Cardiac septum (tissue), 1 donor: ENCODE measurements at regions of chr6 and their contacts with region 1.

Region 1: DNA sequence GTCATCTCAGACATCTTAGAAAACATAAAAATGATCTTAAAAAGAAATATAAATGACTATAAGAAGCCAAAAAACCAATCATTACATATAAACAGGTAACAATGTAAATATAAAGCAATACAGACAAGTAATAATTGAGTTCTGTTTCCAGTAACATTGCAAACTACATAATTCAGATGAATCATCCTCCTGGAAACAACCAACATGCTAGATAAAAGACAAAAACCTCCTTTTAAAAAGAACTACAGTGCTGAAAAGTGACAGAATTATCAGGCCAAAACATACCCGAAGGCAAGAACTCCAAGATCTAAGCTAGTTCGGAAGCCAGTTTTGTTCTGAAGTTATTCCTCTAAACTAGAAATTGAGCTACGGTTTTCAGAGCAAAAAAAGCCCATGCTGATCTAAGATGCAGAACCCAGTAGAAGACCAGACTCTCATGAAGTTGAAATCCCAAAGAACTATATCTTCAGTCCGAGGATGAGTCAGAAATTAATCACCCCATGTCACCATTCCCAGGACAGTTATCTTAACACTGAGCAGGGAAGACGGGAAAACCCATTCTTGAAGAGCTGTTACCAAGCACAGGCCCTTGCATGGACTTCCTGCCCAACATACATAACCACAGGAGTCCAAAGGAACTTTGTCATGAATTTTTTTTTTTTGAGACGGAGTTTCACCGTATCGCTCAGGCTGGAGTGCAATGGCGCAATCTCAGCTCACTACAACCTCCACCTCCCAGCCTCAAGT is 9.8 kb downstream of the PGM3 start:
- DNase-seq: no peak

Region 2: DNA sequence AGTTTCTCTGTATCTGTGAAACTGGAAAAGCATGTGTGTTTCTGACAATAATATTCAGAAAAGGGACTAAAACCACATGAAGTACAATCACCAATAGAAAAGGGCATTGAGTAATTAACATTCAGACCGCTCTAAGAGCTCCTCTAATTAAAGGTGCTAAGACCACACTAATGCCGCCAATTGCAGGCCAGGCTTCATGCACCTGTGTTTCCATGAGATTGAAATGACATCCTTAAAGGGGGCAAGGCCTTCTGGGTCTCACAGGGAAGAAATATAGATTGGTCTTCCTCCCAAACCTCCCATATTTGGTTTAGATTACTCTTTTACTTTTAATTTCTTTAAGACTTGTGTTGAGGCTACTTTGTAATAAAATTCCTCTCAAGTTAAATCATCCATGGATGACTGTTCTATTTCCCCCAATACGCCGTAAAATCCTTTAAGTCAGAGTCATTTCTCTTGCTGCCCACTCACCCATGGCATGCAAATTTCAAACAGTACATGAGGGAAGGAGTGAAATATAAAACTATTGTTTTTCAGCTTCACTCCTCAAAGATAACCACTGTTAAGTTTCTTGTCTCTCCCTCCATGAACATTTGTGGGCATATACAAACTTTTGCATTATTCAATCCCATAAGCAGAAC is 228.2 kb before region 1 on chr6:
- intact Hi-C with region 1: loop called (anchors 10 kb)
- DNase-seq: no peak